H1 (cell line): ENCODE measurements at regions of chr17 and their contacts with region 1.

Region 1: GRCh38 chr17:39199820-39200069 is 338 bp upstream of the RPL19 start:
- DNase-seq: peak in 1 of 2 experiments; percentile 61
- H3K4me3 ChIP-seq: peak overlapping the region; percentile 85 to 96 (median 92); a peak in 7 of 8 replicates
- H3K27ac ChIP-seq: peak overlapping the region; percentile 99
- H3K4me1 ChIP-seq: peaks cover 4 to 26% (median 21%) of the 10 kb centered on the region in 4 experiments
- H3K27me3 ChIP-seq: no peaks in the 10 kb centered on the region
- CTCF ChIP-seq: no peak
- EP300 ChIP-seq: no peak
- POLR2A ChIP-seq: no peak
- RAD21 ChIP-seq: no peak

Region 2: GRCh38 chr17:39174907-39175694 is 24.6 kb before region 1 on chr17:
- CTCF ChIA-PET with region 1: interaction called, 23 read pairs
- POLR2A ChIA-PET with region 1: interaction called, 22 read pairs
- DNase-seq: peak; percentile 82 to 92
- H3K4me3 ChIP-seq: peak overlapping the region in 1 of 4 experiments; percentile 22; a peak in 1 of 8 replicates
- H3K27ac ChIP-seq: no peak overlapping the region
- H3K4me1 ChIP-seq: peaks cover 0 to 14% (median 10%) of the 10 kb centered on the region in 4 experiments; a peak in 6 of 7 replicates
- H3K27me3 ChIP-seq: no peaks in the 10 kb centered on the region
- CTCF ChIP-seq: peak; percentile 87 to 92 (median 91)
- EP300 ChIP-seq: no peak
- POLR2A ChIP-seq: peak in 1 of 2 experiments; percentile 60; a peak in 1 of 3 replicates
- RAD21 ChIP-seq: peak; percentile 71 to 83

Region 3: GRCh38 chr17:39183720-39184119 is 16.0 kb before region 1 on chr17:
- CTCF ChIA-PET with region 1: interaction called, 21 read pairs
- POLR2A ChIA-PET with region 1: interaction called, 10 read pairs
- DNase-seq: no peak
- H3K4me3 ChIP-seq: no peak overlapping the region
- H3K27ac ChIP-seq: no peak overlapping the region
- H3K4me1 ChIP-seq: no peaks in the 10 kb centered on the region
- H3K27me3 ChIP-seq: no peaks in the 10 kb centered on the region
- CTCF ChIP-seq: no peak
- EP300 ChIP-seq: no peak
- POLR2A ChIP-seq: no peak
- RAD21 ChIP-seq: no peak

Region 4: GRCh38 chr17:39225959-39226683 is 26.4 kb after region 1 on chr17:
- CTCF ChIA-PET with region 1: interaction called, 982 read pairs
- POLR2A ChIA-PET with region 1: interaction called, 92 read pairs
- DNase-seq: peak; percentile 81 to 98
- H3K4me3 ChIP-seq: peak overlapping the region in 3 of 4 experiments; percentile 11 to 73 (median 31); a peak in 5 of 8 replicates
- H3K27ac ChIP-seq: no peak overlapping the region
- H3K4me1 ChIP-seq: peaks cover 0 to 16% (median 7%) of the 10 kb centered on the region in 4 experiments; a peak in 6 of 7 replicates
- H3K27me3 ChIP-seq: peaks cover 13 to 30% (median 26%) of the 10 kb centered on the region in 4 experiments; a peak in 6 of 7 replicates
- CTCF ChIP-seq: no peak
- EP300 ChIP-seq: no peak
- POLR2A ChIP-seq: no peak
- RAD21 ChIP-seq: no peak

Region 5: GRCh38 chr17:39235555-39236449 is 36.1 kb after region 1 on chr17:
- CTCF ChIA-PET with region 1: interaction called, 982 read pairs
- POLR2A ChIA-PET with region 1: interaction called, 29 read pairs
- DNase-seq: peak; percentile 49 to 84
- H3K4me3 ChIP-seq: no peak overlapping the region
- H3K27ac ChIP-seq: no peak overlapping the region
- H3K4me1 ChIP-seq: peaks cover 0 to 14% (median 10%) of the 10 kb centered on the region in 4 experiments; a peak in 6 of 7 replicates
- H3K27me3 ChIP-seq: no peaks in the 10 kb centered on the region
- CTCF ChIP-seq: peak; percentile 94 to 100 (median 99)
- EP300 ChIP-seq: no peak
- POLR2A ChIP-seq: no peak
- RAD21 ChIP-seq: peak; percentile 45; a peak in 3 of 4 replicates

Region 6: GRCh38 chr17:39244600-39245570 is 45.1 kb after region 1 on chr17:
- CTCF ChIA-PET with region 1: interaction called, 982 read pairs
- POLR2A ChIA-PET with region 1: interaction called, 113 read pairs
- DNase-seq: peak; percentile 93 to 99
- H3K4me3 ChIP-seq: no peak overlapping the region
- H3K27ac ChIP-seq: no peak overlapping the region
- H3K4me1 ChIP-seq: peaks cover 0 to 9% (median 5%) of the 10 kb centered on the region in 4 experiments; a peak in 6 of 7 replicates
- H3K27me3 ChIP-seq: no peaks in the 10 kb centered on the region
- CTCF ChIP-seq: peak; percentile 83 to 99 (median 93)
- EP300 ChIP-seq: no peak
- POLR2A ChIP-seq: no peak
- RAD21 ChIP-seq: peak; percentile 94 to 96

Region 7: GRCh38 chr17:39261286-39261685 is 61.5 kb after region 1 on chr17:
- CTCF ChIA-PET with region 1: no interaction called
- POLR2A ChIA-PET with region 1: no interaction called
- DNase-seq: peak in 1 of 2 experiments; percentile 82
- H3K4me3 ChIP-seq: no peak overlapping the region
- H3K27ac ChIP-seq: no peak overlapping the region; the same call in 1 of the 2 replicates
- H3K4me1 ChIP-seq: peaks cover 0 to 2% (median 0%) of the 10 kb centered on the region in 4 experiments; a peak in 2 of 7 replicates
- H3K27me3 ChIP-seq: no peaks in the 10 kb centered on the region; a peak in 1 of 7 replicates
- CTCF ChIP-seq: peak; percentile 68 to 92 (median 82)
- EP300 ChIP-seq: no peak
- POLR2A ChIP-seq: no peak
- RAD21 ChIP-seq: peak; percentile 24 to 50